SK-N-SH (cell line): ENCODE measurements at regions of chr10 and their contacts with region 1.

Region 1: GRCh38 chr10:33347211-33347610 is 12.7 kb upstream of the NRP1 start:
- DNase-seq: no peak
- H3K4me3 ChIP-seq: no peak overlapping the region
- H3K27ac ChIP-seq: peak overlapping the region in 1 of 2 experiments; percentile 50; a peak in 1 of 4 replicates
- H3K4me1 ChIP-seq: peaks cover 5 to 10% of the 10 kb centered on the region in 2 experiments; a peak in 3 of 4 replicates
- H3K27me3 ChIP-seq: no peaks in the 10 kb centered on the region
- CTCF ChIP-seq: no peak
- EP300 ChIP-seq: no peak
- RAD21 ChIP-seq: no peak

Region 2: DNA sequence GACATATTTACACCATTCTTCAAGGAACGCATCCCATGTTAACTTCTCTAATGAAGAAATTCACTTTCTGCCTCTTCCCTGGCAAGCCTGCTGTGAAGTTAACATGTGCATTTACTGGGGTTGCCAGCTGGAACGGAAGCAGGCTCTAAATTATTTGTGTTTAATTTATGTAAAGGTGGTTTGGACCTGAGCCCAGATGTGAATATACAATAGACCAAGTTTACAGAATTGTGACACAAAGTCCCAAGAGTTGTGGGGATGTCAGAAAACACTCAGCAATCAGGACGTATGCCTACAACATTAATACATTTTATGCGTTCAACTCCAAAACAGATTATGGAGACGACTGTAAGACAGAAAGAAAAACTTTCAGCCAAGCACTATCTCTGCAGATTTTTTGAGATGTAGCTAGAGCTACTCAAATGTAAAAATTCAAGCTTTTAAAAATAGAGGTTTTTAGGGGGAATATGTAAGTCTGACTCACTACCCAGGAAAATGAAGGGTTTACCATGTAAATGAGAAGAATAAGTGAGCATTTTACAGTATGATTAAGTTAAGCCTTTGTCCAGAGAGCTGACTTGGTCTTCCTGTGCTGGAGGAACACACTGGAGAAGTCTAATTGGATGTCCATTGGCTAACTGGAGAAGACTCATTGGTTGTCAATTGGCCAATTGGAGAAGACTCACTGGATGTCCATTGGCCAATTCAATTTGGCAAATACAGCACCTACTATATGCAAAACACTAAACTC is 32.2 kb before region 1 on chr10:
- CTCF ChIA-PET with region 1: no interaction called
- POLR2A ChIA-PET with region 1: no interaction called
- DNase-seq: no peak
- H3K4me3 ChIP-seq: no peak overlapping the region
- H3K27ac ChIP-seq: peak overlapping the region in 1 of 2 experiments; percentile 2; a peak in 1 of 4 replicates
- H3K4me1 ChIP-seq: peaks cover 8 to 20% of the 10 kb centered on the region in 2 experiments; a peak in 2 of 4 replicates
- H3K27me3 ChIP-seq: no peaks in the 10 kb centered on the region
- CTCF ChIP-seq: no peak
- EP300 ChIP-seq: no peak
- RAD21 ChIP-seq: no peak

Region 3: GRCh38 chr10:33330543-33331378 is 16.4 kb before region 1 on chr10:
- CTCF ChIA-PET with region 1: interaction called, 16 read pairs
- POLR2A ChIA-PET with region 1: no interaction called
- DNase-seq: peak; percentile 80
- H3K4me3 ChIP-seq: peak overlapping the region; percentile 90 to 92
- H3K27ac ChIP-seq: peak overlapping the region; percentile 78 to 93
- H3K4me1 ChIP-seq: peaks cover 16 to 17% of the 10 kb centered on the region in 2 experiments
- H3K27me3 ChIP-seq: no peaks in the 10 kb centered on the region
- CTCF ChIP-seq: peak; percentile 96
- EP300 ChIP-seq: no peak
- RAD21 ChIP-seq: peak; percentile 92